ENCODE measurements at regions of chr1 and their contacts with region 1.

Region 1: GRCh38 chr1:156601122-156601830 is at the start of gene GPATCH4:
- DNase-seq: peak; percentile 58 to 85
- ATAC-seq: peak; percentile 84 to 88 (median 86)
- H3K4me3 ChIP-seq: peak within 1 kb of the TSS; percentile 97
- H3K4me3 Mint-ChIP-seq: peak within 1 kb of the TSS; percentile 99
- H3K27ac ChIP-seq: peak within 1 kb of the TSS; percentile 81
- H3K27ac Mint-ChIP-seq: peak within 1 kb of the TSS; percentile 90 to 92
- H3K4me1 ChIP-seq: peaks cover 26% of the 10 kb centered on the region
- H3K4me1 Mint-ChIP-seq: peaks cover 20 to 28% of the 10 kb centered on the region in 2 donors
- H3K27me3 ChIP-seq: no peaks in the 10 kb centered on the region
- H3K27me3 Mint-ChIP-seq: no peaks in the 10 kb centered on the region
- CTCF ChIP-seq: no peak
- total RNA-seq, gene GPATCH4: 19.3 to 27.3 (median 22.1) TPM

Region 2: GRCh38 chr1:156456622-156457465 is 144.4 kb before region 1 on chr1:
- intact Hi-C with region 1: loop called (anchors 2 kb)
- DNase-seq: peak; percentile 93 to 100
- ATAC-seq: peak; percentile 86 to 97 (median 87)
- H3K4me3 ChIP-seq: peak overlapping the region; percentile 86
- H3K4me3 Mint-ChIP-seq: peak overlapping the region; percentile 95
- H3K27ac ChIP-seq: peak overlapping the region; percentile 98
- H3K27ac Mint-ChIP-seq: peak overlapping the region; percentile 97 to 99
- H3K4me1 ChIP-seq: peaks cover 19% of the 10 kb centered on the region
- H3K4me1 Mint-ChIP-seq: peaks cover 11 to 20% of the 10 kb centered on the region in 2 donors
- H3K27me3 ChIP-seq: no peaks in the 10 kb centered on the region
- H3K27me3 Mint-ChIP-seq: no peaks in the 10 kb centered on the region
- CTCF ChIP-seq: no peak

Region 3: GRCh38 chr1:156583821-156584622 is 17.3 kb before region 1 on chr1:
- intact Hi-C with region 1: loop called (anchors 2 kb)
- DNase-seq: peak; percentile 60 to 92
- ATAC-seq: peak; percentile 73 to 88 (median 82)
- H3K4me3 ChIP-seq: no peak overlapping the region
- H3K4me3 Mint-ChIP-seq: no peak overlapping the region
- H3K27ac ChIP-seq: no peak overlapping the region
- H3K27ac Mint-ChIP-seq: no peak overlapping the region
- H3K4me1 ChIP-seq: peaks cover 32% of the 10 kb centered on the region
- H3K4me1 Mint-ChIP-seq: peaks cover 6 to 24% of the 10 kb centered on the region in 2 donors
- H3K27me3 ChIP-seq: no peaks in the 10 kb centered on the region
- H3K27me3 Mint-ChIP-seq: no peaks in the 10 kb centered on the region
- CTCF ChIP-seq: peak; percentile 94

Region 4: GRCh38 chr1:156612666-156613065 is 11.4 kb after region 1 on chr1:
- intact Hi-C with region 1: no loop called
- DNase-seq: no peak
- ATAC-seq: no peak
- H3K4me3 ChIP-seq: no peak overlapping the region
- H3K4me3 Mint-ChIP-seq: no peak overlapping the region
- H3K27ac ChIP-seq: no peak overlapping the region
- H3K27ac Mint-ChIP-seq: no peak overlapping the region
- H3K4me1 ChIP-seq: peaks cover 6% of the 10 kb centered on the region
- H3K4me1 Mint-ChIP-seq: peaks cover 8 to 9% of the 10 kb centered on the region in 2 donors
- H3K27me3 ChIP-seq: no peaks in the 10 kb centered on the region
- H3K27me3 Mint-ChIP-seq: peaks cover 16 to 20% of the 10 kb centered on the region in 2 donors
- CTCF ChIP-seq: no peak

Region 5: DNA sequence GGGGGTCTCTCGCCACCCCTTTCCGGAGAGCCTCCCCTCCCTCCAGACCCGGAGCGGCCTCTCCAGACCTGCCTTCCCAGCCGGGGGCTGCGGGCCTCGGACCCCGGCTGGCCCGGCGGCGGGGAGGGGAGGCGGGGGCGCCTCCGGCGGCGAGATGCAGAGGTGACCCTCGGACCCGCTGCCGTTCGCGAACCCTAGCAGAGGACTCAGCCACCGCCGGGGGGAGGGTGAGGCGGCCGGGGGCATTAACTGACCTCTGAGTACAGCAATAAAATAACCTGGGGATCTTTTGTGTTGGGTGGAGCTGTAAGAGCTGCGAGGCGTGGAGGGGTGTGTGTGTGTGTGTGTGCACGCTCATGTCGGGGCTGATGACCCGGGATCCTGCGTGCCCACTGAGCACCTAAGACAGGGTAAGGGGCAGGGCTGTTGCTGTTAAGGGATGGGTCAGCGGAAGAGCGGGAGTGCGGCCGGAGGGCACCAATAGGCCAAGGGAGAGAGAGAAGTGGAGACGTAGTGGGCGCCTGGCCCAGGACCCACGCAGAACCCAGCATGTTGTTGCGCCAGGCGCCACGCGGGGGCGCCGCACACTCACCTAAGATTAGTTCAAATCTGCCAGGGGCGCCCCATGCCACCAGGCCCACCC is 24.3 kb after region 1 on chr1:
- intact Hi-C with region 1: no loop called
- DNase-seq: peak; percentile 67 to 85
- ATAC-seq: peak; percentile 73 to 78 (median 77)
- H3K4me3 ChIP-seq: no peak overlapping the region
- H3K4me3 Mint-ChIP-seq: peak overlapping the region; percentile 83
- H3K27ac ChIP-seq: no peak overlapping the region
- H3K27ac Mint-ChIP-seq: no peak overlapping the region
- H3K4me1 ChIP-seq: peaks cover 23% of the 10 kb centered on the region
- H3K4me1 Mint-ChIP-seq: peaks cover 7 to 8% of the 10 kb centered on the region in 2 donors
- H3K27me3 ChIP-seq: peaks cover 30% of the 10 kb centered on the region
- H3K27me3 Mint-ChIP-seq: peaks cover 51 to 55% of the 10 kb centered on the region in 2 donors
- CTCF ChIP-seq: peak; percentile 91